ENCODE measurements at regions of chr17 and their contacts with region 1.

Region 1: GRCh38 chr17:80991645-80992076 is at the start of gene CHMP6:
- DNase-seq: peak; percentile 76
- H3K4me3 ChIP-seq: peak within 1 kb of the TSS; percentile 75 to 100 (median 99)
- H3K27ac ChIP-seq: peak within 1 kb of the TSS; percentile 61 to 92 (median 90)
- H3K4me1 ChIP-seq: peaks cover 13 to 43% (median 30%) of the 10 kb centered on the region in 4 donors
- H3K27me3 ChIP-seq: no peaks in the 10 kb centered on the region
- CTCF ChIP-seq: peak in 1 of 5 experiments; percentile 35
- EP300 ChIP-seq: no peak
- POLR2A ChIP-seq: no peak
- total RNA-seq, gene CHMP6: 38.6 to 107 (median 41.7) TPM

Region 2: DNA sequence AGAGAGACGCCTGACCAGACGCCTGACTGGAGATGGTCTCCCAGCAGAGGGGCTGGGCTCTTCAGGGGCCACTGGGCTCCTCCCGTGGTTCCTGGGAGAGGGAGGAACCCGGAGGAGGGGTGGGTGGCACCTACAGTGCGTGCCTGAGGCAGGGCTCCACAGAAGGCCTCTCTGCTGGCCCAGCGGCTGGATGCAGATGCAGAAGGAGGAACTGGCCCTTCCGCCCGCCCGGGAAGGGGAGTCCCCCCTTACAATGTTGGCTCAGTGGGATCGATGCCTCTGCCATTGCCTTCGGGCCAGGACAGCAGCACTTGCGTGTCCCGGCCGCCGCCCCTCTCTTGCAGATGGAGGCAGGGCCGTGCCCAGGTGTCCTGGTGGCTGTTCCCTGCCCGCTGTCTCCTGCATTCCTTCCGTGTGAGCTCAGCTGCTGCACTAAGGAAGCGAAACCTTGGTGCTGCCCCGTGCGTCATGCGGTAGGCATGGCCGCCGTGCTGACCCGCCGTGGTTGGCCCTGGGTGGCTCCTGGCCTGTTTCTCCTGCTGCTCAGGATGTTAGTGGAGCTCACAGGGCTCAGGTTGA is 58.4 kb after region 1 on chr17:
- in situ Hi-C with region 1: no loop called
- intact Hi-C with region 1: no loop called
- DNase-seq: peak; percentile 82
- H3K4me3 ChIP-seq: no peak overlapping the region
- H3K27ac ChIP-seq: peak overlapping the region; percentile 37 to 67 (median 51)
- H3K4me1 ChIP-seq: peaks cover 10 to 50% (median 36%) of the 10 kb centered on the region in 4 donors
- H3K27me3 ChIP-seq: no peaks in the 10 kb centered on the region
- CTCF ChIP-seq: peak in 1 of 5 experiments; percentile 19
- EP300 ChIP-seq: no peak
- POLR2A ChIP-seq: peak; percentile 35

Region 3: GRCh38 chr17:81094509-81095382 is 103.1 kb after region 1 on chr17:
- in situ Hi-C with region 1: no loop called
- intact Hi-C with region 1: loop called (anchors 2 kb)
- DNase-seq: peak; percentile 72
- H3K4me3 ChIP-seq: no peak overlapping the region
- H3K27ac ChIP-seq: peak overlapping the region; percentile 70 to 76 (median 75)
- H3K4me1 ChIP-seq: peaks cover 22 to 52% (median 45%) of the 10 kb centered on the region in 4 donors
- H3K27me3 ChIP-seq: no peaks in the 10 kb centered on the region
- CTCF ChIP-seq: no peak
- EP300 ChIP-seq: no peak
- POLR2A ChIP-seq: no peak

Region 4: DNA sequence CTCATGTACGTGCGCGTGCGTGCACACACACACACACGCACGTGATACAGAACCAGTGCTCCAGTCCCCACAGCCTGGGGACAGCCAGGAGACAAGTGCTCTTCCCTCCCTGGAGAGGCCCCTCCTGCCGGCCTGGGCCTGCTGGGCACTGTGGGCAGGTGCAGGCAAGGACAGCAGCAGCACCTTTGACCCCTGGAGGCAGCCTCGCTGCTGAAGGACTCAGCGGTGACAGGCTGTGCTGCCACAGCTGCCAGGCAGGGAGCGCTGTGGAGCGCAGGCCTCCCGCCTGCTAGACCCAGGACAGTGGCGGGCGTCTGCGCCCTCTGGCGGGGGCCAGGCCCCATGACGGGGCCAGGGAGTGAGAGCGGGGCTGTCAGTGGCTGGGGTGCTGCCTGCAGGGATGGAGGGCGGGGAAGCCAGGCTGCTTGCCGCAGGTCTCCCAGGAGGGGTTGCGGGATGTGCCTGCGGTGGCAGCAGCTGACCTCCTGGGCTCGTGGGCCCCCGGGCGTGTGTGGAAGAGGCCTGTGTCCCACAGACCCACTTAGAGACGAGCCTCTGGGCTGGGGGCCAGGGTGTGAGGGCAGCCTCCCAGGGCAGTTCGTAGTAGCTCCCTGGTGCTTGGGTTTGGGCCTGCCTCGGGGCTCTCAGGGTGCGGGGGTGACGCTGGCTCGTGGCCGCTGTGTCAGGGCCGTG is 110.1 kb after region 1 on chr17:
- in situ Hi-C with region 1: loop called in 1 of 4 experiments (anchors 10 kb)
- intact Hi-C with region 1: loop called (anchors 2 kb)
- DNase-seq: peak; percentile 86
- H3K4me3 ChIP-seq: no peak overlapping the region
- H3K27ac ChIP-seq: no peak overlapping the region
- H3K4me1 ChIP-seq: peaks cover 12 to 19% (median 14%) of the 10 kb centered on the region in 4 donors
- H3K27me3 ChIP-seq: no peaks in the 10 kb centered on the region
- CTCF ChIP-seq: peak; percentile 100
- EP300 ChIP-seq: no peak
- POLR2A ChIP-seq: no peak

Region 5: DNA sequence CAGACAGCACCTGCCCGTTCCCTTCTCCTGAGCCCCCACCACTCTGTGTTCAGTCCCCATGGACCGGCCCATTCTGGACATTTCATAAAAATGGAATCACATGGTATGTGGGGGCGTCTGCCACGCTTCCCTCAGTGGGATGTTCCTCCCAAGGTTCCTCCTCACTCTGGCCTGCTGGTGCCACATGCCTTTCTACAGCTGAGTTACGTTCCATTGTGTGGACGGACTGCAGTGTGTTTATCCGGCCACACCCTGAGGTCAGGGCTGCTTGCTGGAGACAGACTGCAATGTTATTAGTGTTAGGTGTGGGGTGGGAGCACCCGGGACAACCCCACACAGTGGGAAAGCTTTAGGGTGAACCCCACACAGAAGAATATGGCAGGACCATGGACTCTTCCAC is 180.3 kb after region 1 on chr17:
- in situ Hi-C with region 1: no loop called
- intact Hi-C with region 1: no loop called
- DNase-seq: no peak
- H3K4me3 ChIP-seq: no peak overlapping the region
- H3K27ac ChIP-seq: no peak overlapping the region
- H3K4me1 ChIP-seq: no peaks in the 10 kb centered on the region
- H3K27me3 ChIP-seq: peaks cover 13% of the 10 kb centered on the region
- CTCF ChIP-seq: no peak
- EP300 ChIP-seq: no peak
- POLR2A ChIP-seq: no peak